CD8-positive, alpha-beta T cell (primary cell): ENCODE measurements at regions of chr21 and their contacts with region 1.

Region 1: DNA sequence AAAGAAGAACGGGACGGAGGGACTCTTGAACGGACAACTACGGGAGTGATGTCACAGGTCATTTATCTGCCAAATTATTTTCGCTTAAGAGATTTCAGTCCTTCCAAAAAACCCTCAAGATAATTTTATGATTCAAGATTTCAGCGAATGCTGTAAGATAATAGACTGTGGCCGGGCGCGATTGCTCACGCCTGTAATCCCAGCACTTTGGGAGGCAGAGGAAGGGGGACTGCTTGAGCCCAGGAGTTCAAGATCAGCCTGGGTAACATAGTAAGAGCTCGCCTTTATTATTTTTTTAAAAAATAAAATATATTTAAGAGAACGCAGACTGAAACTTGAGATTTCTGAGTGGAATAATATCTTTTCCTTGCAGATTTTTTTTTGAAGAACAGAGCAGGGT is 609 bp downstream of the RWDD2B start:
- DNase-seq: no peak
- ATAC-seq: no peak
- H3K4me3 ChIP-seq: peak overlapping the region; percentile 70 to 99
- H3K4me3 Mint-ChIP-seq: peak overlapping the region; percentile 89
- H3K27ac ChIP-seq: peak overlapping the region; percentile 77 to 79
- H3K27ac Mint-ChIP-seq: peak overlapping the region; percentile 93
- H3K4me1 ChIP-seq: peaks cover 38% of the 10 kb centered on the region
- H3K4me1 Mint-ChIP-seq: peaks cover 41% of the 10 kb centered on the region
- H3K27me3 ChIP-seq: no peaks in the 10 kb centered on the region
- H3K27me3 Mint-ChIP-seq: no peaks in the 10 kb centered on the region
- CTCF ChIP-seq: no peak

Region 2: GRCh38 chr21:28992526-28993292 is 25.8 kb before region 1 on chr21 and contains the start of gene LTN1:
- CTCF ChIA-PET with region 1: interaction called, 5 read pairs
- POLR2A ChIA-PET with region 1: interaction called, 71 read pairs
- intact Hi-C with region 1: loop called in 1 of 2 experiments (anchors 1 kb)
- DNase-seq: peak; percentile 98 to 100 (median 99)
- ATAC-seq: peak; percentile 93
- H3K4me3 ChIP-seq: peak within 1 kb of the TSS; percentile 95 to 98
- H3K4me3 Mint-ChIP-seq: peak within 1 kb of the TSS; percentile 93
- H3K27ac ChIP-seq: peak within 1 kb of the TSS; percentile 84 to 88
- H3K27ac Mint-ChIP-seq: peak within 1 kb of the TSS; percentile 95
- H3K4me1 ChIP-seq: peaks cover 21% of the 10 kb centered on the region
- H3K4me1 Mint-ChIP-seq: peaks cover 40% of the 10 kb centered on the region
- H3K27me3 ChIP-seq: no peaks in the 10 kb centered on the region
- H3K27me3 Mint-ChIP-seq: no peaks in the 10 kb centered on the region
- CTCF ChIP-seq: no peak
- total RNA-seq, gene LTN1: 26.3 to 28.5 TPM

Region 3: DNA sequence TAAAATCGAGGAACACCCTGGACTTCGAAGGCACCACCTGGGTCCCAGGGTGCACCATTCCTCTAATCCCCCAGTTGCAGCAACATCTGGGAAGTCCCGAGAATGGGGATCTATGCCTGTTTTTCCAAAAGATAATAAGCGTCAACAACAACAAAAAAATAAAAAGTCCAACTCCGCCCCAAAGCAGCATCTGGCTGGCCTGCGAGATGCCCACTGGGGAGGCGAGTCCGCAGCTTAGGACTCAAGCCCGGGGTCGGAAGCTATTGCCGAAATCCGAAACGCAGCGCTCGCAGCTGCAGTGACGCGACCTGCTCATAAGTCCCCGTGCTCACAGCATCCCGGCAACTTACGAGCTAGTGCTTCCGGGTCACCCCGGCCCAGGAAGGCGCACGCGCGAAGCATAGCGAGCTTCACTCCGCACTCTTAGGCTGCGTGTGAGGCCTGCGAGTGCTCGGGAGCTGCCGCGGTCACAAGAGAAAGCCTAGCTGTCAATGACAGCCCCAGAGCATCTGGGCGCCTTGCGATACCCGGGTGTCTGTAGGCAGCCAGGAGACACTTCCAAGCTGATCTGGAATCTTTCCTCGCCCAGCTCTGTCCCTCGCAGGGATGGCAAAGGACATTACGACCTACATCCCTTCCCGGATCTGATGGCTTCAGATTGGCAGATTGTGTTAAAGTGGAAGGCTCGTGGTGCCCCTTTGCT is 15.9 kb before region 1 on chr21:
- CTCF ChIA-PET with region 1: interaction called, 6 read pairs
- POLR2A ChIA-PET with region 1: interaction called, 123 read pairs
- intact Hi-C with region 1: loop called (anchors 1 kb)
- DNase-seq: peak; percentile 90 to 99 (median 95)
- ATAC-seq: peak; percentile 100
- H3K4me3 ChIP-seq: peak overlapping the region; percentile 65 to 71
- H3K4me3 Mint-ChIP-seq: peak overlapping the region; percentile 93
- H3K27ac ChIP-seq: peak overlapping the region; percentile 93 to 94
- H3K27ac Mint-ChIP-seq: peak overlapping the region; percentile 99
- H3K4me1 ChIP-seq: peaks cover 8% of the 10 kb centered on the region
- H3K4me1 Mint-ChIP-seq: peaks cover 15% of the 10 kb centered on the region
- H3K27me3 ChIP-seq: no peaks in the 10 kb centered on the region
- H3K27me3 Mint-ChIP-seq: no peaks in the 10 kb centered on the region
- CTCF ChIP-seq: no peak